ENCODE measurements at regions of chr5 and their contacts with region 1.

Region 1: DNA sequence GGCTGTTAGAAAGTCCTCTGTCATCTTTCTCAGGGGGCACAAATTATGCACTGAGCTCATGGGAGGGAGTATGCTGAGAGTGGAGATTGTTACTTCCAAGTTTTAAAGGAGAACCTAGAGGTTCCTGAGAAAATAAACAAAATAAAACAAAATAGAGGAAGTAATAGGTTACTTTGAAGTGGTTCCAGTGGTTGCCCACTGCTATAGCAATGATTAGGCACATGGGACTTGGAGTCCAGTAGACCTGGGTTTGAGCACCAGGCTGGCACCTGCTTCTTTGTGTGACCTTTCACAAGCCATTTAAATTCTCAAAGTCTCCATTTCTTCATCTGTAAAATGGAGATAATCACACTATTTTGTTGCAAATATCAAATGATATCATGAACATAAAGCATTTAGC is 13.8 kb upstream of the CDC23 start:
- DNase-seq: no peak
- ATAC-seq: no peak
- H3K4me3 ChIP-seq: no peak overlapping the region
- H3K27ac ChIP-seq: no peak overlapping the region
- H3K4me1 ChIP-seq: no peaks in the 10 kb centered on the region
- H3K27me3 ChIP-seq: no peaks in the 10 kb centered on the region

Region 2: GRCh38 chr5:138282920-138283742 is 56.2 kb after region 1 on chr5:
- intact Hi-C with region 1: loop called in 1 of 2 experiments (anchors 5 kb)
- DNase-seq: no peak
- ATAC-seq: peak; percentile 54
- H3K4me3 ChIP-seq: no peak overlapping the region
- H3K27ac ChIP-seq: no peak overlapping the region
- H3K4me1 ChIP-seq: no peaks in the 10 kb centered on the region
- H3K27me3 ChIP-seq: no peaks in the 10 kb centered on the region

Region 3: GRCh38 chr5:138337685-138338410 is 110.9 kb after region 1 on chr5 and contains the start of gene FAM53C:
- intact Hi-C with region 1: loop called in 1 of 2 experiments (anchors 5 kb)
- DNase-seq: peak; percentile 95 to 97
- ATAC-seq: peak; percentile 98
- H3K4me3 ChIP-seq: peak within 1 kb of the TSS; percentile 79 to 83
- H3K27ac ChIP-seq: peak within 1 kb of the TSS; percentile 20 to 93
- H3K4me1 ChIP-seq: peaks cover 0 to 5% of the 10 kb centered on the region in 2 donors
- H3K27me3 ChIP-seq: no peaks in the 10 kb centered on the region
- total RNA-seq, gene FAM53C: 25.8 to 26.7 TPM

Region 4: GRCh38 chr5:138408023-138408422 is 181.1 kb after region 1 on chr5:
- intact Hi-C with region 1: loop called (anchors 5 to 10 kb)
- DNase-seq: no peak
- ATAC-seq: no peak
- H3K4me3 ChIP-seq: no peak overlapping the region
- H3K27ac ChIP-seq: no peak overlapping the region
- H3K4me1 ChIP-seq: peaks cover 0 to 2% of the 10 kb centered on the region in 2 donors
- H3K27me3 ChIP-seq: no peaks in the 10 kb centered on the region